Dendritic cell treated with granulocyte-macrophage colony-stimulating factor and Interleukin-4, amounts not matched to agents 40 ng/mL and 50 ng/mL, for 4 days (primary cell): ENCODE measurements at regions of chr1 and their contacts with region 1.

Region 1: GRCh38 chr1:158793604-158794003 is 12.6 kb upstream of the OR6N2 start:
- H3K4me3 Mint-ChIP-seq: no peak overlapping the region
- H3K27ac Mint-ChIP-seq: no peak overlapping the region
- H3K4me1 Mint-ChIP-seq: peaks cover 44% of the 10 kb centered on the region
- H3K27me3 Mint-ChIP-seq: no peaks in the 10 kb centered on the region

Region 2: GRCh38 chr1:158506369-158506987 is 287.1 kb before region 1 on chr1:
- intact Hi-C with region 1: loop called (anchors 10 kb)
- H3K4me3 Mint-ChIP-seq: no peak overlapping the region
- H3K27ac Mint-ChIP-seq: no peak overlapping the region
- H3K4me1 Mint-ChIP-seq: peaks cover 20% of the 10 kb centered on the region
- H3K27me3 Mint-ChIP-seq: peaks cover 2% of the 10 kb centered on the region

Region 3: GRCh38 chr1:158998781-158999161 is 205.2 kb after region 1 on chr1:
- intact Hi-C with region 1: loop called (anchors 1 kb)
- H3K4me3 Mint-ChIP-seq: no peak overlapping the region
- H3K27ac Mint-ChIP-seq: peak overlapping the region; percentile 40
- H3K4me1 Mint-ChIP-seq: peaks cover 28% of the 10 kb centered on the region
- H3K27me3 Mint-ChIP-seq: no peaks in the 10 kb centered on the region

Region 4: GRCh38 chr1:159214149-159214760 is 420.7 kb after region 1 on chr1:
- intact Hi-C with region 1: no loop called
- H3K4me3 Mint-ChIP-seq: no peak overlapping the region
- H3K27ac Mint-ChIP-seq: no peak overlapping the region
- H3K4me1 Mint-ChIP-seq: peaks cover 21% of the 10 kb centered on the region
- H3K27me3 Mint-ChIP-seq: peaks cover 22% of the 10 kb centered on the region